WTC11 (cell line): ENCODE measurements at regions of chr10 and their contacts with region 1.

Region 1: DNA sequence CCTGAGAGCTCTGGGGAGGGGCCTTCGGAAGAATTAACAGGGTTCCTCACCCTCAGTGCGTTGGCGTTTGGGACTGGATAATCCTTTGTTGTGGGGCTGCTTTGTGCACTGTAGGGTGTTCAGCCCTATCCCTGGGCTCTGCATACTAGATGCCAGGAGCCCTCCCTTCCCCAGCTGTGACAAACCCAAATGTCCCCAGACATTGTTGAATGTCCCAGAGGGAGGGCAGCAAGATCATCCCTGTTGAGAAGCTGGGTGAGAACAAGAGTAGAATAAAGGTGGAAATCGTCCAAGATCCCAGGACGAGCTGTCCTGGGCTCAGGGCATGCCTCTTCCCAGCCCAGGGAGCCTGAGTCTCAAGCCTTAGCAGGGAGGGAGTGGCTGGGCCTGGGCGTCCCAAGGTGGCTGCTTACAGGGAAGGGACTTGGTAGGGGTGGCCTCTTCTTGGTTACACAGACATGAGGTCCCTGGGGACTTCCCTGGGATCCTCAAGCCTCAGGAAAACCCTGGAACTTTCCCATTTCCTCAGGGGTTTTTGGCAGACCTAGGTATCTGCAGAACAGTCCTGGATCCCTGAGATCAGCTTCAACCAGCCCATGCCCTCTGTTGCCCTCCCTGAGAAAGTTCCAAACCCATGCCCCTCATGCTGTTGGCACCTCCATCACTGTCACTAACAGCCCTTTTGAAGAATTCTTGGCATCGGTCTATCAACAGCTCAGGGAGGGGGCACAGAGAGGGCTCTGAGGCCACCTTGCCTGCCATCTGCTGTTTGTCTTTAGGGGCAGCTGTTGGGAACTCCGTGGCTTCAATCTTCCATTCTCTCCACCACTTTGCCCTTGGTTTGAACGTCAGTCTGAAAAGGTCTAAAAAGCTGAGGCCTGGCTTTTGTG is 53.7 kb downstream of the GOLGA7B start:
- DNase-seq: no peak
- ATAC-seq: peak; percentile 16; the same call in 1 of the 2 replicates
- H3K4me3 Mint-ChIP-seq: no peak overlapping the region
- H3K27ac Mint-ChIP-seq: no peak overlapping the region
- H3K4me1 Mint-ChIP-seq: peaks cover 5% of the 10 kb centered on the region; the same call in 1 of the 2 replicates
- H3K27me3 Mint-ChIP-seq: no peaks in the 10 kb centered on the region
- CTCF ChIP-seq: no peak

Region 2: GRCh38 chr10:97914837-97915211 is 11.5 kb after region 1 on chr10:
- CTCF ChIA-PET with region 1: interaction called, 11 read pairs
- POLR2A ChIA-PET with region 1: interaction called, 3 read pairs
- DNase-seq: peak; percentile 93
- ATAC-seq: peak; percentile 95
- H3K4me3 Mint-ChIP-seq: no peak overlapping the region
- H3K27ac Mint-ChIP-seq: no peak overlapping the region
- H3K4me1 Mint-ChIP-seq: peaks cover 8% of the 10 kb centered on the region
- H3K27me3 Mint-ChIP-seq: peaks cover 23% of the 10 kb centered on the region
- CTCF ChIP-seq: peak; percentile 86